Heart right ventricle (tissue), 16 donors: ENCODE measurements at regions of chr9 and their contacts with region 1.

Region 1: GRCh38 chr9:19028835-19029451 is 4.1 kb downstream of the SAXO1 start:
- DNase-seq: peak in 1 of 2 donors; percentile 60
- ATAC-seq: peak in 6 of 8 donors; percentile 65 to 81 (median 74)
- H3K4me3 ChIP-seq: no peak overlapping the region
- H3K27ac ChIP-seq: no peak overlapping the region
- H3K4me1 ChIP-seq: peaks cover 0 to 12% (median 0%) of the 10 kb centered on the region in 9 donors
- H3K27me3 ChIP-seq: peaks cover 0 to 5% (median 0%) of the 10 kb centered on the region in 7 donors
- CTCF ChIP-seq: peak; percentile 60 to 86 (median 78)

Region 2: DNA sequence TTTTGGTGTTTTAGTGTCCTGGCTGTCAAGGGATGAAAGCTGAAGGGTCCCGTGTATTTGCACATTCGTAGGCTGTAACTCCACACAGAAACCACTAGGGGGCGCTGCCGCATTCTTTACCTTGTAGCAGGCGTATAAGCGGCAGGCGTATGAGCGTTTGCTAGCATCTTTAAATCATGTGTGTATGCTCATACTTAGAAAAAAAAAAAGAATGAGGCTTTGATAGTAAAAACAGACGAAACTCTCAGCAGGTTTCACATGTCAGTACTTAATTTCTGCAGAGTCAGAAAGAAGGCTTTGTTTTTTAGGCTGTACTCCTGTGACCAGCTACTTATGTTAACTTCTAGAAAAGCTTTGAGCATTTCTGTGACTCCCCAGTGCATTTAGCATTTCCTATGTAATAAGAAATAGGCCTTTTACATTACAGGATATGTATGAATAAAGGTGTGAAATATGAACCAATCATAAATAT is 773.7 kb before region 1 on chr9:
- intact Hi-C with region 1: loop called (anchors 1 to 10 kb)
- DNase-seq: peak; percentile 70 to 83
- ATAC-seq: peak; percentile 47 to 91 (median 84)
- H3K4me3 ChIP-seq: no peak overlapping the region
- H3K27ac ChIP-seq: no peak overlapping the region
- H3K4me1 ChIP-seq: peaks cover 0 to 21% (median 4%) of the 10 kb centered on the region in 9 donors
- H3K27me3 ChIP-seq: no peaks in the 10 kb centered on the region
- CTCF ChIP-seq: peak; percentile 88 to 98 (median 97)